T-cell (primary cell): ENCODE measurements at regions of chr7 and their contacts with region 1.

Region 1: GRCh38 chr7:64562626-64563275 is at the start of gene ZNF680:
- DNase-seq: peak; percentile 75 to 94 (median 89)
- ATAC-seq: peak; percentile 98 to 99 (median 98)
- H3K4me3 ChIP-seq: peak within 1 kb of the TSS; percentile 68 to 98
- H3K4me3 Mint-ChIP-seq: peak within 1 kb of the TSS; percentile 99 to 100 (median 100)
- H3K27ac ChIP-seq: peak within 1 kb of the TSS; percentile 65
- H3K27ac Mint-ChIP-seq: peak within 1 kb of the TSS; percentile 91 to 97
- H3K4me1 ChIP-seq: peaks cover 2 to 4% of the 10 kb centered on the region in 2 experiments
- H3K4me1 Mint-ChIP-seq: peaks cover 34 to 42% (median 37%) of the 10 kb centered on the region in 3 donors
- H3K27me3 ChIP-seq: no peaks in the 10 kb centered on the region
- H3K27me3 Mint-ChIP-seq: no peaks in the 10 kb centered on the region
- total RNA-seq, gene ZNF680: 9.7 to 16.0 (median 15.0) TPM

Region 2: GRCh38 chr7:64463636-64464378 is 98.9 kb before region 1 on chr7:
- CTCF ChIA-PET with region 1: no interaction called
- POLR2A ChIA-PET with region 1: interaction called in 1 of 2 experiments, 13 read pairs
- DNase-seq: peak in 22 of 35 experiments; percentile 1 to 55 (median 14)
- ATAC-seq: peak in 3 of 4 experiments; percentile 38 to 55 (median 40)
- H3K4me3 ChIP-seq: peak overlapping the region in 1 of 2 donors; percentile 38
- H3K4me3 Mint-ChIP-seq: peak overlapping the region; percentile 27 to 50 (median 43)
- H3K27ac ChIP-seq: no peak overlapping the region
- H3K27ac Mint-ChIP-seq: no peak overlapping the region
- H3K4me1 ChIP-seq: no peaks in the 10 kb centered on the region
- H3K4me1 Mint-ChIP-seq: no peaks in the 10 kb centered on the region
- H3K27me3 ChIP-seq: peaks cover 0 to 3% of the 10 kb centered on the region in 2 experiments
- H3K27me3 Mint-ChIP-seq: peaks cover 0 to 4% of the 10 kb centered on the region in 2 donors

Region 3: GRCh38 chr7:64551375-64552142 is 11.2 kb before region 1 on chr7:
- CTCF ChIA-PET with region 1: no interaction called
- POLR2A ChIA-PET with region 1: no interaction called
- DNase-seq: no peak
- ATAC-seq: no peak
- H3K4me3 ChIP-seq: no peak overlapping the region
- H3K4me3 Mint-ChIP-seq: no peak overlapping the region
- H3K27ac ChIP-seq: no peak overlapping the region
- H3K27ac Mint-ChIP-seq: no peak overlapping the region
- H3K4me1 ChIP-seq: no peaks in the 10 kb centered on the region
- H3K4me1 Mint-ChIP-seq: peaks cover 10 to 19% (median 17%) of the 10 kb centered on the region in 3 donors
- H3K27me3 ChIP-seq: no peaks in the 10 kb centered on the region
- H3K27me3 Mint-ChIP-seq: no peaks in the 10 kb centered on the region

Region 4: GRCh38 chr7:64611406-64612116 is 48.8 kb after region 1 on chr7:
- CTCF ChIA-PET with region 1: no interaction called
- POLR2A ChIA-PET with region 1: no interaction called
- DNase-seq: no peak
- ATAC-seq: no peak
- H3K4me3 ChIP-seq: no peak overlapping the region
- H3K4me3 Mint-ChIP-seq: no peak overlapping the region
- H3K27ac ChIP-seq: no peak overlapping the region
- H3K27ac Mint-ChIP-seq: no peak overlapping the region
- H3K4me1 ChIP-seq: no peaks in the 10 kb centered on the region
- H3K4me1 Mint-ChIP-seq: no peaks in the 10 kb centered on the region
- H3K27me3 ChIP-seq: no peaks in the 10 kb centered on the region
- H3K27me3 Mint-ChIP-seq: no peaks in the 10 kb centered on the region

Region 5: GRCh38 chr7:64665980-64666662 is 103.4 kb after region 1 on chr7 and contains the start of gene ZNF107:
- CTCF ChIA-PET with region 1: no interaction called
- POLR2A ChIA-PET with region 1: interaction called, 5 to 15 read pairs
- DNase-seq: peak; percentile 66 to 90 (median 83)
- ATAC-seq: peak; percentile 97 to 99 (median 98)
- H3K4me3 ChIP-seq: peak within 1 kb of the TSS; percentile 76 to 92
- H3K4me3 Mint-ChIP-seq: peak within 1 kb of the TSS; percentile 97 to 98 (median 98)
- H3K27ac ChIP-seq: peak within 1 kb of the TSS; percentile 94
- H3K27ac Mint-ChIP-seq: peak within 1 kb of the TSS; percentile 92 to 97
- H3K4me1 ChIP-seq: peaks cover 13 to 24% of the 10 kb centered on the region in 2 experiments
- H3K4me1 Mint-ChIP-seq: peaks cover 56 to 68% (median 63%) of the 10 kb centered on the region in 3 donors
- H3K27me3 ChIP-seq: no peaks in the 10 kb centered on the region
- H3K27me3 Mint-ChIP-seq: no peaks in the 10 kb centered on the region
- total RNA-seq, gene ZNF107: 15.1 to 22.6 (median 21.2) TPM